ENCODE measurements at regions of chr6 and their contacts with region 1.

Region 1: DNA sequence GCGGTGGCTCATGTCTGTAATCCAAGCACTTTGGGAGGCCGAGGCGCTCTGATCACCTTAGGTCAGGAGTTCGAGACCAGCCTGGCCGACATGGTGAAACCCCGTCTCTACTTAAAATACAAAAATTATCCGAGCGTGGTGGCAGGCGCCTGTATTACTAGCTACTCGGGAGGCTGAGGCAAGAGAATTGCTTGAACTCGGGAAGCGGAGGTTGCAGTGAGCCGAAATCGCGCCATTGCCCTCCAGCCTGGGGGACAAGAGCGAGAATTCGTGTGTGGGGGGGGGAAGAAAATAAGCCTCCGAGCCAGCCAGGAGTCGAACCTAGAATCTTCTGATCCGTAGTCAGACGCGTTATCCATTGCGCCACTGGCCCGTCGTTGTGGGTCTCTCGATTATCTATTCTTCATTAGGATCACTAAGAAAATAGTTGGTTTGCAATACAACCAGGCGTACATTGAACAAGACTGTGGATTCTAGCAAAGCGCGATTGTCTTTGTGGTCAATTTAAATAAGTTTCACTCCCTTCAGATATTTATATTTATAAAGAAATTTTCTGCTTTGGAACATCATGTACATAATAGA is 33.9 kb upstream of the PRSS16 start:
- DNase-seq: peak; percentile 55 to 88 (median 66)
- ATAC-seq: peak; percentile 71
- H3K4me3 ChIP-seq: peak overlapping the region; percentile 55
- H3K27ac ChIP-seq: peak overlapping the region; percentile 61
- H3K4me1 ChIP-seq: peaks cover 6 to 16% of the 10 kb centered on the region in 2 experiments; a peak in 4 of 5 replicates
- H3K27me3 ChIP-seq: no peaks in the 10 kb centered on the region
- CTCF ChIP-seq: no peak
- EP300 ChIP-seq: peak; percentile 48; the same call in 1 of the 2 replicates
- POLR2A ChIP-seq: no peak
- RAD21 ChIP-seq: no peak

Region 2: DNA sequence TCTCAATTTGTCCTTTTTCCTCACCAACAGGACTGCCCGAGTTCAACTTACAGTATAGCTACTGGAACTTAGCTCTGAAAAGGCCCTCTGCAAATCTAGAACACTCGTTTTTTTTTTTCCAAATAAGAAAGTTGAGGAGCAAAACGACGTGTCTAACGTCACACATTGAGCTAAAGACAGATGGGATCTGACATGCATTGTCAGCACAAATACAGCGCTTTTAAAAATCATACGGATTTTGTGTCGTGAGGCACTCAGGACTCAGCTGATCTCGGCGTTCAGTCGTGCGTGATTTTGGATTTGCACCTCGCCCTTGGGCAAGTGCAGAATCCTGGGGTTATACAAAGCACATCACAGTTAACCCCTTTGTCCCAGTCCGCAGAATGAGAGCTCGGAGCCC is 459.4 kb before region 1 on chr6:
- CTCF ChIA-PET with region 1: no interaction called
- POLR2A ChIA-PET with region 1: no interaction called
- in situ Hi-C with region 1: no loop called
- intact Hi-C with region 1: no loop called
- DNase-seq: no peak
- ATAC-seq: no peak
- H3K4me3 ChIP-seq: no peak overlapping the region
- H3K27ac ChIP-seq: no peak overlapping the region
- H3K4me1 ChIP-seq: no peaks in the 10 kb centered on the region
- H3K27me3 ChIP-seq: no peaks in the 10 kb centered on the region
- CTCF ChIP-seq: no peak
- EP300 ChIP-seq: no peak
- POLR2A ChIP-seq: no peak
- RAD21 ChIP-seq: no peak

Region 3: GRCh38 chr6:27177485-27178406 is 35.9 kb before region 1 on chr6:
- CTCF ChIA-PET with region 1: interaction called, 3 read pairs
- POLR2A ChIA-PET with region 1: no interaction called
- in situ Hi-C with region 1: no loop called
- intact Hi-C with region 1: loop called (anchors 5 kb)
- DNase-seq: peak; percentile 48 to 73 (median 60)
- ATAC-seq: peak; percentile 59
- H3K4me3 ChIP-seq: peak overlapping the region; percentile 74
- H3K27ac ChIP-seq: peak overlapping the region; percentile 73
- H3K4me1 ChIP-seq: peaks cover 20 to 29% of the 10 kb centered on the region in 2 experiments; a peak in 4 of 5 replicates
- H3K27me3 ChIP-seq: no peaks in the 10 kb centered on the region
- CTCF ChIP-seq: peak; percentile 39 to 52 (median 47); a peak in 3 of 6 replicates
- EP300 ChIP-seq: no peak
- POLR2A ChIP-seq: no peak
- RAD21 ChIP-seq: 0 out of 4 replicates have a peak, but pooled peaks of 1 of the 2 experiments have one; percentile 39

Region 4: GRCh38 chr6:27237089-27237803 is 23.6 kb after region 1 on chr6:
- CTCF ChIA-PET with region 1: no interaction called
- POLR2A ChIA-PET with region 1: interaction called, 4 read pairs
- in situ Hi-C with region 1: no loop called
- intact Hi-C with region 1: loop called (anchors 1 kb)
- DNase-seq: peak; percentile 72 to 91 (median 74)
- ATAC-seq: peak; percentile 79
- H3K4me3 ChIP-seq: peak overlapping the region; percentile 20; the same call in 1 of the 2 replicates
- H3K27ac ChIP-seq: peak overlapping the region; percentile 49; the same call in 2 of the 3 replicates
- H3K4me1 ChIP-seq: peaks cover 0 to 8% of the 10 kb centered on the region in 2 experiments; a peak in 1 of 5 replicates
- H3K27me3 ChIP-seq: no peaks in the 10 kb centered on the region
- CTCF ChIP-seq: no peak
- EP300 ChIP-seq: 0 out of 2 replicates have a peak, but pooled peaks have one; percentile 30
- POLR2A ChIP-seq: no peak
- RAD21 ChIP-seq: no peak

Region 5: GRCh38 chr6:27332692-27333641 is 119.3 kb after region 1 on chr6:
- CTCF ChIA-PET with region 1: interaction called, 4 read pairs
- POLR2A ChIA-PET with region 1: no interaction called
- in situ Hi-C with region 1: no loop called
- intact Hi-C with region 1: loop called (anchors 2 kb)
- DNase-seq: peak; percentile 67 to 91 (median 78)
- ATAC-seq: peak; percentile 92
- H3K4me3 ChIP-seq: peak overlapping the region; percentile 64
- H3K27ac ChIP-seq: peak overlapping the region; percentile 82
- H3K4me1 ChIP-seq: peaks cover 0 to 5% of the 10 kb centered on the region in 2 experiments; a peak in 2 of 5 replicates
- H3K27me3 ChIP-seq: no peaks in the 10 kb centered on the region
- CTCF ChIP-seq: peak in 1 of 3 experiments; percentile 18; a peak in 1 of 6 replicates
- EP300 ChIP-seq: peak; percentile 71
- POLR2A ChIP-seq: no peak
- RAD21 ChIP-seq: no peak; a peak in 2 of 4 replicates

Region 6: GRCh38 chr6:27503436-27504030 is 289.9 kb after region 1 on chr6:
- CTCF ChIA-PET with region 1: no interaction called
- POLR2A ChIA-PET with region 1: no interaction called
- in situ Hi-C with region 1: no loop called
- intact Hi-C with region 1: loop called (anchors 5 kb)
- DNase-seq: peak; percentile 58 to 92 (median 72)
- ATAC-seq: peak; percentile 63
- H3K4me3 ChIP-seq: peak overlapping the region; percentile 55
- H3K27ac ChIP-seq: peak overlapping the region; percentile 87
- H3K4me1 ChIP-seq: peaks cover 8 to 29% of the 10 kb centered on the region in 2 experiments
- H3K27me3 ChIP-seq: no peaks in the 10 kb centered on the region
- CTCF ChIP-seq: 0 out of 6 replicates have a peak, but pooled peaks of 1 of the 3 experiments have one; percentile 1
- EP300 ChIP-seq: no peak; the same call in 1 of the 2 replicates
- POLR2A ChIP-seq: no peak
- RAD21 ChIP-seq: peak in 1 of 2 experiments; percentile 3; a peak in 1 of 4 replicates

Region 7: DNA sequence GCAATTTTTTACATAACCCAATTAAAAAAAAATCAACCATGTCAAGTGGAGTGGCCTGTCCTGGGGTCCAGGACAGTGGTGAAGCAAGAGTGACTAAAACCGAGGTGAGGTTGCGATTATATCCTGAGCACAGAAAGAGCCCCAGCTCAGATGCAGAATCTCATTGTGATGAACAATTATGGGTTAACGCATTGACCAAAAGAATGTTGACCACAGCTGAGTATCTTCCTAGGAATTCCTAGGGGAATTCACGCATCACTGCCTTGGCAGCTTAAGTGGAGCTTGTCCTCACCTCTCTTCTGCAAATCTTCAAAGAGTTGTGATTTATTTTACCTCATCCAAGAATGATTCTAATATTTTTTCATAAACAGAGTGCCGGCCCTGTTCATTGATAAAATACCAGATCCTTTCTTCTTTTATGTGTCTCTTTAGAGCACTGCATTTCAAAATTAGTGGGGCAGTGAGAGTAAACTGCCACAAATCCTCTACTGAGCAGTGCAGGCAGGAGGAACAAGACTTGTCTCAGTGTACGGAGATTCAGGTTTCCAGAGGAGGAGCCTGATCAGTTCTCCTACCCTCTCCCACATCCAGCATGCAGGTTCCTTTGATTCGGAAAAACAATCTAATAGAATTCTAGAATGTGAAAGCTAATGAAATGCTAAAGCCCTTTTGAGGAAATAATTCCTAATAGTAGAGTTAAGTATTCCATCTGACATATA is 319.3 kb after region 1 on chr6:
- CTCF ChIA-PET with region 1: no interaction called
- POLR2A ChIA-PET with region 1: no interaction called
- in situ Hi-C with region 1: no loop called
- intact Hi-C with region 1: no loop called
- DNase-seq: no peak
- ATAC-seq: peak; percentile 42
- H3K4me3 ChIP-seq: no peak overlapping the region
- H3K27ac ChIP-seq: no peak overlapping the region
- H3K4me1 ChIP-seq: peaks cover 4 to 13% of the 10 kb centered on the region in 2 experiments; a peak in 4 of 5 replicates
- H3K27me3 ChIP-seq: no peaks in the 10 kb centered on the region
- CTCF ChIP-seq: no peak
- EP300 ChIP-seq: no peak
- POLR2A ChIP-seq: no peak
- RAD21 ChIP-seq: no peak

Region 8: GRCh38 chr6:27592481-27593199 is 379.0 kb after region 1 on chr6:
- CTCF ChIA-PET with region 1: no interaction called
- POLR2A ChIA-PET with region 1: no interaction called
- in situ Hi-C with region 1: no loop called
- intact Hi-C with region 1: no loop called
- DNase-seq: peak; percentile 76 to 94 (median 86)
- ATAC-seq: peak; percentile 94
- H3K4me3 ChIP-seq: peak overlapping the region; percentile 48
- H3K27ac ChIP-seq: peak overlapping the region; percentile 53
- H3K4me1 ChIP-seq: peaks cover 8 to 13% of the 10 kb centered on the region in 2 experiments; a peak in 4 of 5 replicates
- H3K27me3 ChIP-seq: no peaks in the 10 kb centered on the region
- CTCF ChIP-seq: peak in 1 of 3 experiments; percentile 20; a peak in 2 of 6 replicates
- EP300 ChIP-seq: peak; percentile 84
- POLR2A ChIP-seq: no peak
- RAD21 ChIP-seq: peak; percentile 33 to 47; a peak in 3 of 4 replicates

Region 9: DNA sequence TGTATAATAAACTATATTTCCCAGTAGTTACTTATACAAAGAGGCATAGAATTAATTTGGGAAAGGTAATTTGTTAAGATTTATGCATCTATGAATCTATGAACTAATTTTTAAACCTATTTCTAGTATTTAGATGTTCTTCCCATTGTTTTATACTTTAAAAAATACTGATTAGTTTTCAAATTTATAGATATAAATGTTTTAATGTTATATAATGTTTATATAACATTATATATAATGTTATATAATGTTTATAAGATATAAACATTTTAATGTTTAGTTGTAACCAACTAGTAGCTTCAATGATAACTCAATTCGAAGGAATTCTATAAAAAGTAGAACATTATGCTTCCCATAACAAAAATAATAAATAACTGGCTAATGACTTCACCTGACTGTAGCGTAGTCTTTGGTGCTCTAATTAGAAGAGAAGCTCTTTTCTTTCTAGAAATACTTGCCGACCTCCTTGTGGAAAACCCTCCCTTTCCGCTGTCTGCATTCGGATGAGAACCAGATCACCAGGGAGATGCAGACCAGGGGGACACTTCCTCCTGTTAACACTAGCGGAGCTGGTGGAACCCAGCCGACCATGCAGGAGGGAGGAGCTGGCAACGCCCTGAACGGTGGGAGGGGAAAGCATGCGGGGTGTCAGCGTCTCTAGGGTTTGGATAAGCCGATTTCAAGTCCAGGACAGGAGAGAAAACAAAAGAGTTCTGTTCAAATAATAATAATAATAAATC is 540.2 kb after region 1 on chr6:
- CTCF ChIA-PET with region 1: interaction called, 4 read pairs
- POLR2A ChIA-PET with region 1: interaction called, 4 read pairs
- in situ Hi-C with region 1: no loop called
- intact Hi-C with region 1: loop called (anchors 5 kb)
- DNase-seq: peak; percentile 84 to 98 (median 89)
- ATAC-seq: peak; percentile 93
- H3K4me3 ChIP-seq: peak overlapping the region; percentile 67
- H3K27ac ChIP-seq: peak overlapping the region; percentile 44; the same call in 2 of the 3 replicates
- H3K4me1 ChIP-seq: peaks cover 14 to 16% of the 10 kb centered on the region in 2 experiments; a peak in 4 of 5 replicates
- H3K27me3 ChIP-seq: no peaks in the 10 kb centered on the region
- CTCF ChIP-seq: peak; percentile 49 to 61 (median 55)
- EP300 ChIP-seq: peak; percentile 13
- POLR2A ChIP-seq: peak; percentile 67
- RAD21 ChIP-seq: peak in 1 of 2 experiments; percentile 30; a peak in 1 of 4 replicates